ENCODE measurements at regions of chr9 and their contacts with region 1.

Region 1: DNA sequence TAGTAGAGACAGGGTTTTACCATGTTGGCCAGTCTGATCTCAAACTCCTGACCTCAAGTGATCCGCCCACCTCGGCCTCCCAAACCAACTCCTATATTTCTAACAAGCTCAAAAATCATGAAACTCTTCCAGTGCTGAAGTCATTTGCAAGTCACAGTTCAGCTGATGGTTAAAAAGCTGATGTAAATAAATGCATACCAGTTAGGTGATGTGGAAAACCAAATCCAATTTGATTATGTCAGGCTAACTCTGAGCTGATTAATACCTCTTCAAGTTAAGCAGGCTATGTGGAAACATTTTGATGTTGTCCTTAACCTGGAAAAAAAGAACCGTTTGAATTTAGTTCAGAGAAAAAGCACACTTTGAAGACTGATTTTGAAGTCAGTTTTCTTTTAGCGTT is 51.0 kb downstream of the TMEM252 start:
- DNase-seq: no peak
- ATAC-seq: no peak
- H3K4me3 ChIP-seq: no peak overlapping the region
- H3K27ac ChIP-seq: no peak overlapping the region
- H3K4me1 ChIP-seq: no peaks in the 10 kb centered on the region
- H3K27me3 ChIP-seq: no peaks in the 10 kb centered on the region
- CTCF ChIP-seq: no peak

Region 2: DNA sequence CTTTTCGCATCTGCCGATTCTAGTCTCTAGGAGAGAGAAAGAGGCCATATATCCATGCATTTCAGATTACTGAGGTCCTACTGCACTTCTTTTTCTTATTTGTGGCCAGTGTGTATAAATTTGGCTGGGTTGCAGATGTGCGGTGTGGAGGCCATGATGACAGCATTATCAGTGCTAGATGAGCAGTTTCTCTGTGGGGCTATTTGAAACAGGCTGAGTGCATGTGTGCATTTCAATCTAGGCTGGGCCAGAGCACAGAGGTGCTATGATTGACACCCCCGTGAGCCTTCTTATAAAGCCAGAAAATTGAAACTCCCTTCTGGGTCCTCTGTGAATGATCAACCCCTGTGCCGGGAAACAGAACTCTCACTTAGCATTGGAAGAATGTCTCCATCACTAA is 19.0 kb before region 1 on chr9:
- intact Hi-C with region 1: loop called in 1 of 2 experiments (anchors 2 kb)
- DNase-seq: no peak
- ATAC-seq: no peak
- H3K4me3 ChIP-seq: no peak overlapping the region
- H3K27ac ChIP-seq: no peak overlapping the region
- H3K4me1 ChIP-seq: no peaks in the 10 kb centered on the region
- H3K27me3 ChIP-seq: no peaks in the 10 kb centered on the region
- CTCF ChIP-seq: no peak

Measured in psoas muscle (tissue), 8 donors.